Activated naive CD4-positive, alpha-beta T cell treated with anti-CD3 and anti-CD28 coated beads, Interleukin-2, amount 10 ng/mL, durations not matched to agents 7 days and 5 days (primary cell): ENCODE measurements at regions of chr7 and their contacts with region 1.

Region 1: GRCh38 chr7:16564909-16565426 is 38.3 kb downstream of the LRRC72 start:
- DNase-seq: no peak
- H3K4me3 Mint-ChIP-seq: no peak overlapping the region
- H3K27ac Mint-ChIP-seq: no peak overlapping the region
- H3K4me1 Mint-ChIP-seq: peaks cover 22% of the 10 kb centered on the region
- H3K27me3 Mint-ChIP-seq: no peaks in the 10 kb centered on the region

Region 2: GRCh38 chr7:16078076-16078952 is 486.7 kb before region 1 on chr7:
- CTCF ChIA-PET with region 1: interaction called, 26 read pairs
- DNase-seq: peak; percentile 32
- H3K4me3 Mint-ChIP-seq: no peak overlapping the region
- H3K27ac Mint-ChIP-seq: no peak overlapping the region
- H3K4me1 Mint-ChIP-seq: no peaks in the 10 kb centered on the region
- H3K27me3 Mint-ChIP-seq: no peaks in the 10 kb centered on the region

Region 3: DNA sequence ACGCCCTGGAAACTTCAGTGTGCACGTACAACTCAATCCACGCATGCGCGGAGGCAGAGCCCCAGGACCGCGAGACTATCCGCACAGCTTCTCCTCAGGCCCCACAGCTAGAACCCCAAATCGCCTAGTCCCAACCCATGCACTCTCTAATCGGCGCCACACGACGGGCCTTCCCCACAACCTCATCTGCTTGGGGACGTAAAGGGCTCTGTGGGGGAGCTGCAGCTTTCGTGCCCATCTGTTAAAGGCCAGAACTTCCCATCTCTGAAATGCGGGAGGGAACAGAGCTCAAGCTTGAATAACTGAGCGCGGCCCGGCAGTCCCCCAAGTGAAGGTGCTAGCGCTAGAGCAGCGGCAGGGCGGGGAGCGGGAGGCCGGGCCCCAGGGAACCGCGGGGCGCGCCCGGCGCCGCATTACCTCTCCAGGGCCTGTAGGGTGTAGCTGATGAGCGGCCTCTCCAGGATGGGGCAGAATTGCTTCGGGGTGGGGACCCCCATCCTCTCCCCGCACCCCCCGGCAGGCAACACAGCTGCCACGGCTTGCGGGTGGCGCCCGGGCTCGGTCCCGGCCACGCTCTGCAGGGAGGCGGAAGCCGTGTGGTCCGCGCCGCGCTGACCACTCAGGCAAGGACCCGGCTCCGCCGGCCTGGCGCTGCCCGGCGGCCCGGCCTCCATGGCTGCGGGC is 144.2 kb before region 1 on chr7:
- CTCF ChIA-PET with region 1: interaction called, 12 read pairs
- DNase-seq: peak; percentile 91
- H3K4me3 Mint-ChIP-seq: peak overlapping the region; percentile 79
- H3K27ac Mint-ChIP-seq: peak overlapping the region; percentile 95
- H3K4me1 Mint-ChIP-seq: peaks cover 31% of the 10 kb centered on the region
- H3K27me3 Mint-ChIP-seq: no peaks in the 10 kb centered on the region

Region 4: DNA sequence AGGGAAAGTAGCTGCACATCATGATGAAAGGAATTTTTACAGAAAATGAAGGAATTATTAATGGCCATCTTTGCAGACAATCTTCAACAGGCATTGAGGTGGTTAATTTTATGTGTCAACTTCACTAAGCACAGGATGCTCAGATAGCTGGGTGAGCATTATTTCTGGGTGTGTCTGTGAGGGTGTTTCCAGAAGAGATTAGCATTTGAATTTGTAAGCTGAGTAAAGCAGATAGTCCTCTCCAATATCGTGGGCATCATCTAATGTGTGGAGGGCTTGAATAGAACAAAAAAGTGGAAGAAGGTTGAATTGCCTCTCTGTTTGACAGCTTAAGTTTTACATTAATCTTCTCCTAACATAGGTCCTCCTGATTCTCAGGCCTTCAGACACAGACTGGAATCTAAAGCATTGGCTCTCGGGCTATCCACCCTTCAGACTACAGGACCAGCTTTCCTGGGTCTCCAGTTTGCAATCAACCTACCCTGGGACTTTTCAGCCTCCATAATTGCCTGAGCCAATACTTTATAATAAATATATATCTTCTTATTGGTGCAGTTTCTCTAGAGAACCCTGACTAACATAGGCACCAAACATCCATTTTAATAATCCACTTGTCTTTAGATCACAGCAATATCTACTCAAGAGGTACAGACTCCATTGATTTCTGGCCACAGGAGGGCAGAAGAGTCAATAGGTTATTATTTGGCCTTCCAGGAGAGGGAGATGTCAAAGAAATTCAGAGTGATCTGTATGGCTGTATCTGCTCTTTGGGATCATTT is 133.1 kb before region 1 on chr7:
- CTCF ChIA-PET with region 1: interaction called, 63 read pairs
- DNase-seq: peak; percentile 43
- H3K4me3 Mint-ChIP-seq: no peak overlapping the region
- H3K27ac Mint-ChIP-seq: no peak overlapping the region
- H3K4me1 Mint-ChIP-seq: no peaks in the 10 kb centered on the region
- H3K27me3 Mint-ChIP-seq: no peaks in the 10 kb centered on the region